Activated T-helper 2 cell treated with anti-CD3 and anti-CD28 coated beads, Interferon-gamma antibody, Interleukin-2, Interleukin-4, amounts not matched to agents 10 μg/mL and 5 μg/mL and 100 μg/mL, durations not matched to agents 14 hours and 24 hours and 36 hours (primary cell): ENCODE measurements at regions of chr10 and their contacts with region 1.

Region 1: GRCh38 chr10:30751678-30752331 is 122.3 kb upstream of the LYZL2 start:
- DNase-seq: no peak
- H3K4me3 Mint-ChIP-seq: no peak overlapping the region
- H3K27ac Mint-ChIP-seq: peak overlapping the region; percentile 65
- H3K4me1 Mint-ChIP-seq: peaks cover 56% of the 10 kb centered on the region
- H3K27me3 Mint-ChIP-seq: no peaks in the 10 kb centered on the region

Region 2: GRCh38 chr10:30736685-30737232 is 15.0 kb before region 1 on chr10:
- intact Hi-C with region 1: loop called (anchors 1 kb)
- DNase-seq: peak; percentile 32
- H3K4me3 Mint-ChIP-seq: no peak overlapping the region
- H3K27ac Mint-ChIP-seq: peak overlapping the region; percentile 87
- H3K4me1 Mint-ChIP-seq: peaks cover 31% of the 10 kb centered on the region
- H3K27me3 Mint-ChIP-seq: no peaks in the 10 kb centered on the region

Region 3: DNA sequence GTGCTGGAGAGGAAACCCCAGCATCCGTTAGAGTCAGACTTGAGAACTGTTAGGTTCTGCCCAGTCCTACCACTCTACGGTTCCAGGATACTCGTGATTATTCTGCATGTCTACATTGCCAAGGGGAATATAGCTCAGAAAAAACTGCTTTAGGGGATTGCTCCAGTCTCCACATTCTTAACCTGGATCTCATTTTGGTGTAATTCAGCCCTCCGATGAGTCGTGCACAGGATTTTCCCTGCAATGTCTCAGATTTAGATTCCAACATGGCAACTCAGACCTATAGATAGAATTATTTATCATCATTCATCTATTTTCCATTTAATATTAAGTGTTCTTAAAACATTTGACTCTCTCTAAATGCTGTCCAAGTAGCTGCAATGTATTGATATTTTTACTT is 446.1 kb after region 1 on chr10:
- intact Hi-C with region 1: no loop called
- DNase-seq: no peak
- H3K4me3 Mint-ChIP-seq: no peak overlapping the region
- H3K27ac Mint-ChIP-seq: no peak overlapping the region
- H3K4me1 Mint-ChIP-seq: no peaks in the 10 kb centered on the region
- H3K27me3 Mint-ChIP-seq: no peaks in the 10 kb centered on the region